ENCODE measurements at regions of chr6 and their contacts with region 1.

Region 1: GRCh38 chr6:35573495-35574110 is 60.9 kb upstream of the TULP1 start:
- DNase-seq: no peak
- ATAC-seq: no peak

Region 2: GRCh38 chr6:34723203-34723602 is 850.4 kb before region 1 on chr6:
- intact Hi-C with region 1: no loop called
- DNase-seq: no peak
- ATAC-seq: no peak

Region 3: GRCh38 chr6:36862164-36862847 is 1288.7 kb after region 1 on chr6:
- intact Hi-C with region 1: loop called (anchors 5 kb)
- DNase-seq: no peak
- ATAC-seq: no peak

Measured in sciatic nerve (tissue), 2 donors.